CD8-positive, alpha-beta memory T cell (primary cell): ENCODE measurements at regions of chr5 and their contacts with region 1.

Region 1: DNA sequence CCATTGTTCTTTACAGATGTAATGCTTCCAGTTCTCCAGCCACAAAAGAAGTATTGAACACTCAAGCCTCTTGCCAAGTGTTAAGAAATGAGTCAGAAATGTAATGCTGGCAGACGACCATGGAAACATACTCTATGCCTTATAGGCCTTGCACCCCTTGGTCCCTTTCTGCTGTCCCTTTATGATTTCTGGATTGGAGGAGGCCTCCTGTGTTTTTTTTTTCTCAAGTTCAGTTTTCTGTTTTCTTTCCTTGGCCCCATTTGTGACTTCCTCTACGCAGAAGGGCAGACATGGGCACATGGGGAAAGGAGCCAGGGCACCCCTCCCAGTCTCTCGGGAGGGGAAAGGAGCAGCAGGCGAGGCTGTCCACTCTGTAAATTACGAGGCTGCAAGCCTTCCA is 53.4 kb downstream of the SNX18 start:
- DNase-seq: no peak
- H3K4me3 ChIP-seq: no peak overlapping the region
- H3K4me3 Mint-ChIP-seq: no peak overlapping the region
- H3K27ac ChIP-seq: no peak overlapping the region
- H3K27ac Mint-ChIP-seq: no peak overlapping the region
- H3K4me1 ChIP-seq: peaks cover 10% of the 10 kb centered on the region
- H3K4me1 Mint-ChIP-seq: peaks cover 14 to 21% (median 17%) of the 10 kb centered on the region in 3 donors
- H3K27me3 ChIP-seq: no peaks in the 10 kb centered on the region
- H3K27me3 Mint-ChIP-seq: peaks cover 0 to 1% of the 10 kb centered on the region in 2 donors

Region 2: GRCh38 chr5:54470677-54471076 is 100.2 kb before region 1 on chr5:
- CTCF ChIA-PET with region 1: no interaction called
- POLR2A ChIA-PET with region 1: no interaction called
- DNase-seq: no peak
- H3K4me3 ChIP-seq: no peak overlapping the region
- H3K4me3 Mint-ChIP-seq: peak overlapping the region in 1 of 7 donors; percentile 2
- H3K27ac ChIP-seq: no peak overlapping the region
- H3K27ac Mint-ChIP-seq: peak overlapping the region in 1 of 8 donors; percentile 83
- H3K4me1 ChIP-seq: no peaks in the 10 kb centered on the region
- H3K4me1 Mint-ChIP-seq: peaks cover 6 to 14% (median 13%) of the 10 kb centered on the region in 3 donors
- H3K27me3 ChIP-seq: no peaks in the 10 kb centered on the region
- H3K27me3 Mint-ChIP-seq: peaks cover 6 to 9% of the 10 kb centered on the region in 2 donors

Region 3: GRCh38 chr5:54553659-54554207 is 17.2 kb before region 1 on chr5:
- CTCF ChIA-PET with region 1: no interaction called
- POLR2A ChIA-PET with region 1: no interaction called
- DNase-seq: no peak
- H3K4me3 ChIP-seq: no peak overlapping the region
- H3K4me3 Mint-ChIP-seq: no peak overlapping the region
- H3K27ac ChIP-seq: no peak overlapping the region
- H3K27ac Mint-ChIP-seq: peak overlapping the region in 1 of 8 donors; percentile 13
- H3K4me1 ChIP-seq: no peaks in the 10 kb centered on the region
- H3K4me1 Mint-ChIP-seq: peaks cover 0 to 2% (median 0%) of the 10 kb centered on the region in 3 donors
- H3K27me3 ChIP-seq: no peaks in the 10 kb centered on the region
- H3K27me3 Mint-ChIP-seq: no peaks in the 10 kb centered on the region

Region 4: GRCh38 chr5:54580997-54581811 is 10.3 kb after region 1 on chr5:
- CTCF ChIA-PET with region 1: no interaction called
- POLR2A ChIA-PET with region 1: interaction called, 11 read pairs
- DNase-seq: no peak
- H3K4me3 ChIP-seq: no peak overlapping the region
- H3K4me3 Mint-ChIP-seq: no peak overlapping the region
- H3K27ac ChIP-seq: no peak overlapping the region
- H3K27ac Mint-ChIP-seq: no peak overlapping the region
- H3K4me1 ChIP-seq: no peaks in the 10 kb centered on the region
- H3K4me1 Mint-ChIP-seq: peaks cover 6 to 14% (median 7%) of the 10 kb centered on the region in 3 donors
- H3K27me3 ChIP-seq: no peaks in the 10 kb centered on the region
- H3K27me3 Mint-ChIP-seq: peaks cover 0 to 3% of the 10 kb centered on the region in 2 donors